GM18951 (cell line): ENCODE measurements at regions of chr13 and their contacts with region 1.

Region 1: DNA sequence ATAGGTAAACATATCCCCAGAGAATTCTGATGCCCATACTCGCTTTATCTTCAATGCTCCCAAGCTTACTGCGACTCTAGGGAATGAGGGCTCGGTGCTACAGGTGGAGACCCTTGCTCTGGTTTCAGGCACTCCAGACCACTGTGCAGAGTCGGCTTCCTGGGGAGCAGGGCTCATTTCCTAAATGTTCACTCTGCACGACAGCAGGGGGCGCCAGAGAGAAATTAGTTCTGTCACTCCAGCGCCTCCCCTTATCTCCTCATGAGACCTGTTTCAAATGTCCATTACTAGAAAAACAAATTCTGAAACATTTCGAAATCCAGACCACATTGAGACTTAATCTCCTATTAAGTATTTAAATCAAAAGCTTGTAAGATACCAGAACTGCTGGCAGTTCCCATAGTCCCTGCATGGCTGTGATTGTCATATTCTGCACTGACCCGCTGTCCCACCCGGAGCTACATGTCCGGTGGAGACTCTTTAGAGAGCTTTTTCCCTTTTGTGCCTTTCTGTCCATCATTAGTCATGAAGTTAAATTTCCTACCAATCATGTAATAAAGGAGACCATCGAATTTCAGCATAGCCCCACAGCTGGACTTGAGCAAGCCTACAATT is 22.4 kb downstream of the EPSTI1 start:
- POLR2A ChIP-seq: no peak

Region 2: DNA sequence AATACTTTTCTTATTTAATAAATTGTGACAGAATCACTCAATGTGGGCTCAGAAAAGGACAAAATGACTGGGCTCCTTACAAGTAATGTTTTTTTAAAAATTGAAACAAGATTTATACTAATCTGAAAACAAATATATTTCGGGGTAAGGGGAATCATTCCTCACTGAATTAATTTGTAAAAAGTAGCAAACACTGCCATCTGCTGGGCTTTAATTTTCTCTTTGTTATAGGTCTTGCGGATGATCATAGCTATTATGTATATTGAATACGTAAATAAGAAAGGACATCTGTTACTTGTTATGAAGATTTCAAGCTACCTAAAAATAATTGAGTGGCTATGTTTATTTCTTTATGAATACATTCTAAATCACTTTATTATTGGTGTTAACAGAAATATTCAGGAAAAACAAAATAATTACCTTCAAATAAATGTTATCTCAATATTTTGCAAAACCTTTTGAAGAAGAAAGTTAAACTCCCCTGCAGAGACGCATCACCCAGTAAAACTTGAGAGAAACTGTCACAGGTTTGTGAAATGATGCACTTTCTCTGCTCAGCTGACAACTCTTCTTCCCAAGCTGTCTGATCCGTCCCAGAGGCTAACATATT is 834.9 kb after region 1 on chr13:
- in situ Hi-C with region 1: loop called (anchors 25 kb)
- POLR2A ChIP-seq: no peak